ENCODE measurements at regions of chr2 and their contacts with region 1.

Region 1: DNA sequence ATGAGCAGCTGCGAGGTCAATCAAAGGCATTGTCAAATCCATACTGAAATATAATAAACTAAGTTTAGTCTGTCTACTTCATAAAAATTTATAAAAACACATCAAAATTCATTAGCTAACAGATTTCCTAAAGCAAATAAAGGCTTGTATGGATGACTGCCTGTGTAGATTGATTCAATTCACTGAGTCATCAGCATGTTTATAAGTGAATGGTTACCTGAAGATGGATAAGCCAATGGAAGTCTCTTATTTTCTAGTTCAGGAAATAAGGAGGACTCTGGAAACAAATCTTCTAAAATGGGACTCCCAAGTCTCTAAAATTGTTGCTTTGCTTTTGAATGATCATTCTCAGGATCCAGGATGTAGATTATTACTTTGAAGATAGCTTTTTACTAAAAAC is 57.0 kb upstream of the HNRNPA3 start:
- DNase-seq: no peak
- CTCF ChIP-seq: no peak

Region 2: GRCh38 chr2:176126929-176127773 is 1028.5 kb before region 1 on chr2:
- in situ Hi-C with region 1: loop called (anchors 10 kb)
- DNase-seq: peak; percentile 76
- CTCF ChIP-seq: peak; percentile 79

Measured in GM13977 (cell line).